Cardiac septum (tissue), 1 donor: ENCODE measurements at regions of chr20 and their contacts with region 1.

Region 1: GRCh38 chr20:34825530-34826362 is at the start of gene NCOA6:
- DNase-seq: peak; percentile 94
- total RNA-seq, gene NCOA6: 18.5 TPM

Region 2: DNA sequence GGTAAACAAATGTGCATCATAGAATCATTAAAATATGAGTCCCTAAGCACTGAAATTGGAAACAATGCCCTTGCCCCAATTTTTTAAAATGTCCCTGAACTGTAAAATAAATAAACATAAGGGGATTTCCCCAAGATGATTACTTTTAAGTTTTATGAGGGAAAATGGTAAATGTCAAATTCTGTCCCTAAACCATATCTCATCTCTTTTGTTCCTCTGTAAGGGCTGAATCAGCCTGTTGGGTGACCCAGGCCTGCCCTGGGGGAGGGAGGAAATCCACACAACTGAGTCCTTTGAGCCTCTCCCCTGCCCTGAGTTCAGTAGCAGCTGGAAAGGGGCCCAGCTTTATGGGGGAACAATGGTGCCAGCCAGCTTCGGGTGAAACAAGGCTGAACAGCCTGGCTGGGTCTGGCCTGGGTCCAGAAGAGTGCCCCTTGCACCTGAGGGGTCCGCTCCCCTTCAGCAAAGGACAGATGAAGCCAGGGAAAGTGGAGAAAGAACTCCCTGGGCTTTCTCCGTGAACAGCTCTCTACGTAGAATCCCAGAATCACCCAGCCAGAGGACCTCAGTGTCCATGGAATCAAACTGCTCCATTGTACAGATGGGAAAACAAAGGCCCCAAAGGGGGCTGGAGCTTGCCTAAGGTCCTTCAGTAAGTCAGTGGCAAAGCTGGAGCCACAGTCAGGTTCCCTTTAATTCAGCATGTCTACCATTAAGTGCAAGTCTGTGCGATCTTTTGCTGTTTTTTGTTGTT is 490.9 kb before region 1 on chr20:
- intact Hi-C with region 1: no loop called
- DNase-seq: no peak

Region 3: DNA sequence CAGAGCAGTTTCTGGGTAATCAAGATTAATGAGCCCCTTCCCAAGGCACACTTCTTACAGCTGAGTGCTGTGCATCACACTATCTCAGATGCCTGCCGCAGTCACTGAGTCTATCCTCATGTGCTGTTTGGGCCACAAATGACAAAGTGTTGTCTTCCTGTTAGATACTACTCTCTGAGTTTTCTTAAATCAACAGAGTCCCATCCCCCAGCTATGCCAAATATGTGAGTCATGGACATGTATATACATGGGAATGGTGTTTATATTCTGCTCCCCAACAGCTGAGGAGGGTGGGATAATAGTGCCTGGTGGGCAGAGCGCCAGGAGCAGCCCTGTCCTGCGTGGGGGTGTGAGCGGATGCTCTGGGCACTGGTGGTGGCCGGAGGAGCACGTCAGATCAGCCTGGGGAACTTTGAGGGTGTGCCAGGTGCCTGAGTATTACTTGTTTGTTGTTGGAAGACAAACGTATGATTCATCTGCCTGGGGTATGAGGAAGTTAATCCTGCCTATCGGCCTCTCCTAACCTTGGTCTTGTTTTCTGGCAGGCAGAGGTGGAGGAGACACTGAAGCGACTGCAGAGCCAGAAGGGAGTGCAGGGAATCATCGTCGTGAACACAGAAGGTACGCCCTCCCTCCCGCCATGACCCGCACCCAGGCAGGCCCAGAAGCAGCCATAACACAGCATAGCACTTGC is 299.9 kb before region 1 on chr20:
- intact Hi-C with region 1: no loop called
- DNase-seq: peak; percentile 77

Region 4: DNA sequence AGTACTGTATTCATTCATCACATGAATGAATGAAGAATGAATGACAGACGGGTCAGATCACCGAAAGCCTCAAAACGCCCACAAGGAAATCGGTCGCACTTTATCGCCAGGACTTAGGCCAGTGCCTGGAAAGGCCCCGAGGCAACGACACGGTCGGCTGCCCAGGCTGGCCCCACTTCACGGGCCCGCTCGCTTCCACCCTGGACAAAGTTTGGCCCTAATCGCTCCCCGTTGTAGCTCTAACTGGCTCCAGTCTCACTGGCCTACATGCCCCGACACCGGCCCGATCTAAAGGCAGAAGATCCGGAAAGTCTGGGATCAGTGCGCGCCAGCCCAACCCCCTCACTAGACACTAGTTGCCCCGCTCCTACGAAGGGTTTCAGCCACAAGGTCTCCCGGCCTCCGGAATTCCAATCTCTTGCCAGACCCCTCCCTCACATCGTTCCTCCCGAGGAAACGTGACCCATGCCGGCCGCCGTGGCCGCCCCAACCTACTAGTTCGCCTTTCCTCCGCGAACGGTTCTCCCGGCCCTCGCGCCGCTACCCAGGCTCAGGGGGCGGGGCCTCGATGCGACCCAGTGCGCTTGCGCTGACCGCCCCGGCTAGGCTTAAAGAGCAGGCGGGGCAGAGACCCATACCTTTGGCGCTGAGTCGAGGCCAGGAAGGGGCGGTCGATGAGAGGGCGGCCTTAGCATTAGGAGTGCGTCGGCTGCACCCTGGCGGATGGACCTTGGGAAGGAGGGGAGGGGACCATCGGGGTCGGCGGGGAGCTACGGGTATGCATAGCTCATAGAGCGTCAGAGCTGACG is 129.7 kb after region 1 on chr20 and contains the starts of genes GSS and MYH7B:
- intact Hi-C with region 1: loop called (anchors 5 kb)
- DNase-seq: peak; percentile 99
- total RNA-seq, gene GSS: 27.5 TPM
- total RNA-seq, gene MYH7B: 238 TPM

Region 5: GRCh38 chr20:35478804-35479472 is 653.2 kb after region 1 on chr20:
- intact Hi-C with region 1: no loop called
- DNase-seq: no peak